Posterior cingulate gyrus (tissue), 11 donors: ENCODE measurements at regions of chr17 and their contacts with region 1.

Region 1: GRCh38 chr17:5065227-5065744 is 13.0 kb upstream of the ZFP3 start:
- DNase-seq: no peak

Region 2: DNA sequence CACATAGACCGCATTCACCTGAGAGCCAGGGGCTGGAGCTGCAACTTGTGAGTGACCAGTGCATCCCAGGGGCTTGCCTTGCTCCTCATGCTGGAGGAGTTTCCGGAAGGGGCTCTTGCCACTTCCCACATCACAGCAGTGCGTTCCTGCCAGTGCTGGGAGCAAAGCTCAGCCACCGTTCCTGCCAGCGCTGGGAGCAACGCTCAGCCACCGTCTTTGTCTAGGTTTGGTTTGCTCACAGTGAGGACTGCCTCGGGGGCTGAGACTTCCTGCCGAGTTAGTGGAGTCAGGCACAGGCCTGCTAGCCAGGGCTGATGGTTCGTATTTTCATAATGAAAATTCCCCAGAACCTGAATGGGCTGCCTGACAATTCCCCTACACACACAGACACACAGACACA is 157.0 kb before region 1 on chr17:
- intact Hi-C with region 1: loop called (anchors 1 kb)
- DNase-seq: peak in 3 of 10 donors; percentile 47 to 75 (median 52)

Region 3: DNA sequence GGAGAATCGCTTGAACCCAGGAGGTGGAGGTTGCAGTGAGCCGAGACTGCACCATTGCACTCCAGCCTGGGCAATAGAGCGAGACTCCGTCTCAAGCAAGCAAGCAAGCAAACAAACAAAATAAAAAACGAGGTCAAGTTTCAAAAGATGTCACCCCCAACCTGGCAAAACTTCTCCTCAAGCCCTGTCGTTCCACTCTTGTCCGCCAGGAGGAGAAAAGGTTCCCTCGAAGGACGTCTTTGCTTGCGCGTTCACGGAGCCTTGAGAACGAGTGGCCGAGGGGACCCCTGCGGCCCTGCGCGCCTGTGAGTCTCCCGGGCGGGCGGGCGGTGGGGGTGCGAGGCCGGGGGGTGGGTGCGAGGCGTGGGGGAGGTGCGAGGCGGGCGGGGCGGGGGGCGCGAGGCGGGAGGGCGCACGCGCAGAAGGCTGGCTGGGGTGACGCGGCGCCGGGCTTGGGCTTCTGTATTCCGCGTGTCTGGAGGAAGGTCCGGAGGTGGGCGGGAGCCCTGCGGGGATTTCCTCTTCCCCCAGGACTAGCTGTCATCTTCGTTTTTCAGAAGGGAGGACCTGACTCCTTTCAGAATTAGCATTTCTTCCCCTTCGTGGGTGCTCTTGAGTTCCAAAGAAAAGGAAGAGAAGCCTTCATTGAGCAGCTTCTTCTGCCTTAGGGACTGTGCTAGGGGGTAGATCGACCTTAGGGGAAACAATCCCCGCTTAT is 33.8 kb before region 1 on chr17:
- intact Hi-C with region 1: loop called (anchors 1 kb)
- DNase-seq: peak; percentile 29 to 94 (median 68)